Posterior vena cava (tissue), 2 donors: ENCODE measurements at regions of chr16 and their contacts with region 1.

Region 1: DNA sequence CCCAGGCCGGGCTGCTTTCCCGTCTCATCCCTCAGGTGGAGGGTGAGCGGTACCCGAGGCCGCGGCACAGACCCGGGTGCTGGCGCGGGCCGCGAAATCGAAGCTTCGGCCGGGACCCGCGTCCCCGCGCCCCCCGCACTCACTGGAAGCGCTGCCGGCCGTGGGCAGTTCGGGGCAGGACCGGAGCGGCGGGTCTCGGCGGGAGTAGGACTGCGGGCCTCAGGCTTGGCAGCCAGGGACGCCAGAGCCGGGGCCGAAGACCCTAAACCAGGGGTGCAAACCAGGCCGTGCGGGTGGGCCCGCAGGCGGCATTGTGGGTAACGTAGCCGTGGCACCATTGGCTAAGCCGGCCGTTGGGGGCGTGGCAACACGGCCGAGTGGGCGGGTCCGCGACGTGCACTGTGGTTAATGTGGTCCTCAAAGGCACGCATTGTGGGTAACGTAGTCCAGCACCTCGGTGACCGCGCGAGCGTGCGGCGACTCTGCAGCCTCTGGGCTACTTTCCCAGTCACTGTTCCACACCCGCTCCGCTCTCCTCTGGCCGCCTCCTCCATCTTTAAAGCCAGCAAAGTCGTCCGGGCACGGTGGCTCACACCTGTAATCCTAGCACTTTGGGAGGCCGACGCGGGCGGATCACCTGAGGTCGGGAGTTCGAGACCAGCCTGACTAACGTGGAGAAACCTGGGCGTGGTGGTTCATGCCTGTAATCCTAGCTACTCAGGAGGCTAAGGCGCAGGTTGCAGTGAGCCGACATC is at the start of gene ZNF500:
- DNase-seq: peak; percentile 99
- total RNA-seq, gene ZNF500: 7.9 TPM

Region 2: GRCh38 chr16:4944333-4945281 is 177.6 kb after region 1 on chr16:
- intact Hi-C with region 1: loop called in 1 of 2 experiments (anchors 10 kb)
- DNase-seq: peak; percentile 96